ENCODE measurements at regions of chr2 and their contacts with region 1.

Region 1: DNA sequence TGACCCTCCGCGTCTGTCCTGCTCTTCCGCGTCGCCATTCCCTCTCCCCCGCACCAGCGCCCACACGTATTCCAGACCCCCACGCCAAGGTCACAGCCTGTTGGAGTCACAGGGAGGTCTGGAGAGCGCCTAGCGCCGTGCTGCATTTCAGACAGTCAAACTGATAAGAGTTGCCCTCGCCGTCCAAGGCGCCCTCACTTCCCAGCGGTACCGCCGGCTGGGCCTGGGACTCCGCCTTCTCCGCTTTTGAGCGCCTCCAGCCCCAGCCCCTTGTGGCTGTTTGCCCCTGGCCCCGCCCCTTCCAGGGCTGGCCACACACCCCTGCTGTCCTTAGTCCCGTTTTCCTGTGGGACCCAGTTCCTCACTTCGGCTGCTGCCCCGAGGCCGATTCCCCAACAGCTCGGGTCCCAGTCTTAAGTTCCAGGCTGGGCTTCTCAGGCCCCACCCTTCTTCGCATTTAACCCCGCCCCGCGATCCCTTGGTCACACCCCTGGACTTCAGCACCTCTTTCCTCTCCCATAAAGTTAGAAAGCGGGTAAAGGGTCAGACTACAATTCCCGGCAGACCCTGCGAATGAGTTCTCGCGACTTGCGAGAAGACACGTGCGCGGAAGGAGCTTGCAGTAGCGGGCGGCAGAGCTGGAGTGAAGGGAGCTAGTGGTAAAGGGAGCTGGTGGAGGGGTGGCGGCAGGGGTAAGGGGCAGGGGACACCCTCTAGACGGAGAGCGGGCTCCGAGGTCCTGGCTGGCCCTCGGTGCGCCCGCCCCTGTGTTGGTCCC is at the start of gene GMPPA:
- DNase-seq: peak; percentile 94
- H3K4me3 Mint-ChIP-seq: peak within 1 kb of the TSS; percentile 93
- H3K27ac Mint-ChIP-seq: peak within 1 kb of the TSS; percentile 91
- H3K4me1 Mint-ChIP-seq: peaks cover 36% of the 10 kb centered on the region
- H3K27me3 Mint-ChIP-seq: peaks cover 35% of the 10 kb centered on the region
- total RNA-seq, gene GMPPA: 41.3 and 50.3 TPM in 2 replicates

Region 2: DNA sequence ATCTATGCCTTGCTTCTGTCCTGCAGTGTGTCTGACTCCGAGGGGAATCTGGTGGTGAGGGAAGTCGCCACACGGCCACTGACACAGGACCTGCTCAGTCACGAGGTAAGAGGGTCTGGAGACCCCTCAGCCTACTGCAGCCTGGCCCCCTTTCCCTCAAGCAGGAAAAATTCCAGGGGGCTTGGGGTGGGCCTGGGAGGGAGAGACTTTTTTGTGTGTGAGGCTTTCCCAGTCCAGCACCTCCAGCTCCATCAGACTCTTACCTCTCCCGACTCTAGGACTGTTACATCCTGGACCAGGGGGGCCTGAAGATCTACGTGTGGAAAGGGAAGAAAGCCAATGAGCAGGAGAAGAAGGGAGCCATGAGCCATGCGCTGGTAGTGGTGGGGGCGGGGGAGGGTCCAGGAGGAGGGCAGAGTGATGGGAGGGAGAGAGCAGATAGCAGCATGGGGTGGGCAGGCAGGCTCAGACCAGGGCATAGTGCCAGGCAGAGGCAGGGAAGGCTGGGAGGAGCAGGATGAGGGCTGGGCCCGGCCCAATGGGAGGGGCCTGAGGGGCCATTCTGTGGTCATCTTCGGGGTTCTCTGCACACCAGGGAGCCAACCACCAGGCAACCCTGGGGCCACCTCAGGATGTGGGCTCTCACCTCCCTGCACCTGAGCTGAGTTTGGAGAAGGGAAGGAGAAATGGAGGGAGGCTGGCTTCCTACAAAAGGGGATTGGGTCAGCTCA is 1068.7 kb before region 1 on chr2:
- intact Hi-C with region 1: no loop called
- DNase-seq: no peak
- H3K4me3 Mint-ChIP-seq: no peak overlapping the region
- H3K27ac Mint-ChIP-seq: no peak overlapping the region
- H3K4me1 Mint-ChIP-seq: no peaks in the 10 kb centered on the region
- H3K27me3 Mint-ChIP-seq: peaks cover 3% of the 10 kb centered on the region

Region 3: GRCh38 chr2:218898109-218898878 is 600.2 kb before region 1 on chr2:
- intact Hi-C with region 1: loop called (anchors 5 kb)
- DNase-seq: peak; percentile 71
- H3K4me3 Mint-ChIP-seq: peak overlapping the region; percentile 73
- H3K27ac Mint-ChIP-seq: peak overlapping the region; percentile 86
- H3K4me1 Mint-ChIP-seq: peaks cover 42% of the 10 kb centered on the region
- H3K27me3 Mint-ChIP-seq: peaks cover 56% of the 10 kb centered on the region

Region 4: GRCh38 chr2:219229305-219230058 is 269.0 kb before region 1 on chr2 and contains the starts of genes ANKZF1 and ATG9A:
- intact Hi-C with region 1: loop called (anchors 1 kb)
- DNase-seq: peak; percentile 98
- H3K4me3 Mint-ChIP-seq: peak within 1 kb of the TSS; percentile 97
- H3K27ac Mint-ChIP-seq: peak within 1 kb of the TSS; percentile 99
- H3K4me1 Mint-ChIP-seq: peaks cover 47% of the 10 kb centered on the region
- H3K27me3 Mint-ChIP-seq: no peaks in the 10 kb centered on the region
- total RNA-seq, gene ANKZF1: 112 and 117 TPM in 2 replicates
- total RNA-seq, gene ATG9A: 55.3 and 57.0 TPM in 2 replicates

Region 5: DNA sequence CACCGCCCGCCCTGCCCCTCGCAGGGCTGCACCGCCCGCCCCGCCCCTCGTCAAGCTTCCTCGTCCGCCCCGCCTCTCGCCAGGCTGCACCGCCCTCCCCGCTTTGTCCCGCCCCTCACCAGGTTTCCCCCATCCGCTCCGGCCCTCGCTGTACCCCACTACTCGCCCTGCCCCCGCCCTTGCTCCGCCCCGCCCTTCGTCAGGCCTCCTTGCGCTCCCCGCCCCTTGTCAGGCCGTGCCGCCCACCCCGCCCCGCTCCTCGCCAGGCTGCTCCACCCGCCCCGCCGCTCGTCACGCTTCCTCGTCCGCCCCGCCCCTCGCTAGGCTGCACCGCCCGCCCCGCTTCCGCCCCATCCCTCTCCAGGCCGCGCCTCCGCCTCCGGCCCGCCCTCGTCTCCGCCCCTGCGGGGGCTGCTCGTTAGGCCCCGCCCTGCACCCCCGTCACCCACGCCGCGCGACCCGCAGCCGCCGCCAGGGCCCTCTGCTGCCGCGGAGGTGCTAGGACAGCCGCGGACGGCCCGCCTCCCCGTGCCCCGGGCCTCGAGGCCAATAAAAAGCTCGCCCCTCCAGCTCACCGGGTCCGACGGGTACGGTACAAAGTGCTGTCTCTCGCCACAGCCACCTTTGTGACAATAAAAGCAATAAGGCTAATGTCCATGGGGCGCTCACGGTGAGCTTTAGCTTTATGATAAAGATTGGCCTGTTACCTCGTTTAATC is 110.2 kb before region 1 on chr2:
- intact Hi-C with region 1: loop called (anchors 1 kb)
- DNase-seq: peak; percentile 95
- H3K4me3 Mint-ChIP-seq: peak overlapping the region; percentile 97
- H3K27ac Mint-ChIP-seq: peak overlapping the region; percentile 67
- H3K4me1 Mint-ChIP-seq: peaks cover 6% of the 10 kb centered on the region
- H3K27me3 Mint-ChIP-seq: peaks cover 23% of the 10 kb centered on the region

Region 6: DNA sequence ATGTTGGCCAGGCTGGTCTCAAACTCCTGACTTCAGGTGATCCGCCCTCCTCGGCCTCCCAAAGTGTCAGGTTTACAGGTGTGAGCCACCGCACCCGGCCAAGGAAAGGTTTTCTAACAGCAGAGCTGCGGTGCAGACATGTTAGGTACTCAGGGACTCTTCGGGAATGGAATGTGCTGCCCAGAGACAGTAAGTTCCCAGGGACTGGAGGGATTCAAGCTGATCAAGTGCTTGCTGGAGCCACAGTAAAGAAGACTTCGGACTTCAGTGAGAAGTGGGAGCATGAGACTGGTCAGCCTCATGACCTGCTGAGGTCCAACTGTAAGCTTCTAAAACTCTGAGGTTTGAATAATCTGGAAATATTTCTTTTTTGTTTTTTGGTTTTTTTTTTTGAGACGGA is 88.1 kb before region 1 on chr2:
- intact Hi-C with region 1: no loop called
- DNase-seq: no peak
- H3K4me3 Mint-ChIP-seq: no peak overlapping the region
- H3K27ac Mint-ChIP-seq: no peak overlapping the region
- H3K4me1 Mint-ChIP-seq: no peaks in the 10 kb centered on the region
- H3K27me3 Mint-ChIP-seq: peaks cover 27% of the 10 kb centered on the region

Region 7: DNA sequence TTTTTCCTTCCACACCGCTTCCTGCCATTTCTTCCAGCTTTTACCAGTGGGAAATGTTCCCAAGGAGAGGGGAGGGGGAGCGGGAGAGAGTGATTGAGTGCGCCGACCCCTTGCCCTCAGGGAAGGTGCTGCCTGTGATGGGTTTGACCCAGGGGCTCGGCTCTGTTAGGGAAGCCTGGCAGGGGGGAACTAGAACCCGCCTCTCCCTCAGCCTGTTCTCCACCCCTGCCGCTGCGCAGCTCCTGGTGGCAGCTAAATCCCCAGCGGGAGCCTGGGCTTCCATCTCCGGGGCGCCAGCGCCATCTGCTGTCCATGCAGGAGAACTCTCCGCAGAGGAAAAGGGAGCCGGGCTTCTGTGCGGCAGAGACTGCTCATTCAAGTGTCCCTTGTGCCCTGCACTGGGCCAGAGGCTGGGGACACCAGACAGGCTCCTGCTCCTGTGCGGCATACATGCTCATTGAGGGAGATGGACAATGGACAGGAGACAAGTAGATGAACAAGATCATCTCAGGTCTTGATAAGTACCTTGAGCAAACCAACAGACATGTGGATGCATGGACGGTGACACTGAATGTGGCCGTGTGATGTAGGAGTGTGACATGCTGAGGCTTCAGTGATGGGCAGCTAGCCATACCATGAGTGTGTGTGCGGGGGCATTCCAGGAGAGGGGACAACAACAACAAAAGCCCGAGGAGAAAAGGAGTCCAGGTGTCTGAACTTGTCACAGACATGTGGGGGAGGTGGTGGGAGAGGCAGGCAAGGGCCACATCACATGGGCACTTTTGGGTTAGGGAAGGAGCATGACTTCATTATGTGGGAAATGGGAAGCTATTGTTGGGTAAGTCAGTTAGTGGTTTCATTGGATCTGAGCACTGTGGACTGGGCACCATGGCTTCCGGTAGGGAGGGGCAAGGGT is 31.8 kb after region 1 on chr2:
- intact Hi-C with region 1: loop called (anchors 1 kb)
- DNase-seq: peak; percentile 74
- H3K4me3 Mint-ChIP-seq: no peak overlapping the region
- H3K27ac Mint-ChIP-seq: no peak overlapping the region
- H3K4me1 Mint-ChIP-seq: peaks cover 6% of the 10 kb centered on the region
- H3K27me3 Mint-ChIP-seq: peaks cover 41% of the 10 kb centered on the region

Region 8: GRCh38 chr2:219597552-219598307 is 99.3 kb after region 1 on chr2 and contains the start of gene STK11IP:
- intact Hi-C with region 1: loop called (anchors 1 kb)
- DNase-seq: peak; percentile 89
- H3K4me3 Mint-ChIP-seq: peak within 1 kb of the TSS; percentile 90
- H3K27ac Mint-ChIP-seq: peak within 1 kb of the TSS; percentile 96
- H3K4me1 Mint-ChIP-seq: peaks cover 26% of the 10 kb centered on the region
- H3K27me3 Mint-ChIP-seq: peaks cover 2% of the 10 kb centered on the region
- total RNA-seq, gene STK11IP: 38.0 and 38.9 TPM in 2 replicates